Psoas muscle (tissue), 8 donors: ENCODE measurements at regions of chr3 and their contacts with region 1.

Region 1: DNA sequence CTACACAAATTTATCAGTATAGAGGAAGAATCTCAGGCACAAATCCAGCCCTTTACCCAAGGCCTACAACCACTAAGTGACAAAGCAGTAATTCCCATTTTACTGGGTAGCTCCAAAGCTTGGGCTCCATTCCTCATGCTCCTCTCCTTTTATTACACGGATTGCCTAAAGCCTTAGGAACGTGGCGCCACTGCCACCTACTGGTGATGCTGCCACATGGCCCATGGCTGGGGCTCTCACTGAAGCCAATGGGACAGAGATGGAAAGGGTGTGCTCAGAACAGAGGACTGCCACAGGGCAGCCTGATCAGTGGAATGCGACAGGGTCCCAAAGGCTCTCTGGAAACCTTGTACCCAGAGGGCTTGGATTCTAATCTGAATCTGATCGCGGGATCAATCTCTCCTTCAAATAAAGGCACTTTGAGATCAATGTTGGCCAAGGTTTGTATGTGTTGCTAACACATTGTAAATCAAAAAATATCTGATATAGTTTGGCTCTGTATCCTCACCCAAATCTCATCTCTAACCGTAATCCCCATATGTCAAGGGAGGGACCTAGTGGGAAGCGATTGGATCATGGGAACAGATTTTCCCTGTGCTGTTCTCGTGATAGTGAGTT is 33.5 kb upstream of the LYZL4 start:
- DNase-seq: peak; percentile 76 to 89
- ATAC-seq: peak; percentile 93 to 99 (median 94)
- H3K4me3 ChIP-seq: no peak overlapping the region
- H3K27ac ChIP-seq: no peak overlapping the region
- H3K4me1 ChIP-seq: no peaks in the 10 kb centered on the region
- H3K27me3 ChIP-seq: peaks cover 0 to 6% (median 2%) of the 10 kb centered on the region in 3 donors
- CTCF ChIP-seq: peak; percentile 95

Region 2: GRCh38 chr3:41893977-41894376 is 550.0 kb before region 1 on chr3:
- intact Hi-C with region 1: loop called (anchors 5 to 10 kb)
- DNase-seq: no peak
- ATAC-seq: peak in 1 of 4 donors; percentile 59
- H3K4me3 ChIP-seq: no peak overlapping the region
- H3K27ac ChIP-seq: no peak overlapping the region
- H3K4me1 ChIP-seq: no peaks in the 10 kb centered on the region
- H3K27me3 ChIP-seq: no peaks in the 10 kb centered on the region
- CTCF ChIP-seq: peak; percentile 60

Region 3: DNA sequence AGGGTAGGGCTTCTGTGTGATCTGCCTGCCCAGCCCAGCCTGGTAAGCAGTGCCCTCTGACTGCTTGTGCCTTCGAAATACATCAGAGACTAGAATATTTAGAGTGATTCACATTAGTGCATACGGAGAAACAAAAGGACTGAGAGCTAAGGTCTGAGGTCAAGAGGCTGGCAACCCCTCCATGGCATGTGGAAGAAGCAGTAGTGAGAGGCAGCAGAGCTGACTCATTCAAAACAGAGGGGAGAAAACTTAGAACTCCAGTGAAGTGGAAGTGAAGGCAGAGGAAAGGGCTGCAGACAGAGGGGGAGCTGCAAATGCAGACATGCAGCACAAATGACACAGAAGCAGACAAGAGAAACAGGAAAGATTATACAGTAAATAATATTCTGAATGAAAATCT is 543.7 kb before region 1 on chr3:
- intact Hi-C with region 1: loop called (anchors 5 to 10 kb)
- DNase-seq: no peak
- ATAC-seq: no peak
- H3K4me3 ChIP-seq: no peak overlapping the region
- H3K27ac ChIP-seq: no peak overlapping the region
- H3K4me1 ChIP-seq: no peaks in the 10 kb centered on the region
- H3K27me3 ChIP-seq: no peaks in the 10 kb centered on the region
- CTCF ChIP-seq: no peak

Region 4: GRCh38 chr3:42118762-42119361 is 325.1 kb before region 1 on chr3:
- intact Hi-C with region 1: loop called (anchors 5 to 10 kb)
- DNase-seq: peak in 1 of 2 donors; percentile 72
- ATAC-seq: peak; percentile 60 to 73 (median 64)
- H3K4me3 ChIP-seq: no peak overlapping the region
- H3K27ac ChIP-seq: peak overlapping the region; percentile 48
- H3K4me1 ChIP-seq: peaks cover 77% of the 10 kb centered on the region
- H3K27me3 ChIP-seq: no peaks in the 10 kb centered on the region
- CTCF ChIP-seq: peak; percentile 53

Region 5: GRCh38 chr3:42229942-42230688 is 213.8 kb before region 1 on chr3:
- intact Hi-C with region 1: loop called (anchors 2 kb)
- DNase-seq: no peak
- ATAC-seq: peak; percentile 41 to 72 (median 48)
- H3K4me3 ChIP-seq: no peak overlapping the region
- H3K27ac ChIP-seq: no peak overlapping the region
- H3K4me1 ChIP-seq: peaks cover 4% of the 10 kb centered on the region
- H3K27me3 ChIP-seq: peaks cover 0 to 6% (median 0%) of the 10 kb centered on the region in 3 donors
- CTCF ChIP-seq: peak; percentile 55

Region 6: GRCh38 chr3:42247576-42248027 is 196.3 kb before region 1 on chr3:
- intact Hi-C with region 1: loop called in 1 of 2 experiments (anchors 5 kb)
- DNase-seq: no peak
- ATAC-seq: peak in 2 of 4 donors; percentile 46 to 56
- H3K4me3 ChIP-seq: no peak overlapping the region
- H3K27ac ChIP-seq: no peak overlapping the region
- H3K4me1 ChIP-seq: no peaks in the 10 kb centered on the region
- H3K27me3 ChIP-seq: peaks cover 0 to 4% (median 0%) of the 10 kb centered on the region in 3 donors
- CTCF ChIP-seq: peak; percentile 52

Region 7: GRCh38 chr3:42652611-42653302 is 208.8 kb after region 1 on chr3:
- intact Hi-C with region 1: no loop called
- DNase-seq: peak; percentile 56 to 73
- ATAC-seq: peak; percentile 19 to 31 (median 27)
- H3K4me3 ChIP-seq: peak overlapping the region; percentile 78
- H3K27ac ChIP-seq: peak overlapping the region; percentile 98
- H3K4me1 ChIP-seq: peaks cover 43% of the 10 kb centered on the region
- H3K27me3 ChIP-seq: no peaks in the 10 kb centered on the region
- CTCF ChIP-seq: no peak